MCF 10A (cell line): ENCODE measurements at regions of chr5 and their contacts with region 1.

Region 1: GRCh38 chr5:15794052-15794985 is 294.3 kb downstream of the FBXL7 start:
- DNase-seq: no peak
- H3K4me3 Mint-ChIP-seq: no peak overlapping the region
- H3K27ac Mint-ChIP-seq: no peak overlapping the region
- H3K4me1 Mint-ChIP-seq: no peaks in the 10 kb centered on the region
- H3K27me3 Mint-ChIP-seq: peaks cover 12% of the 10 kb centered on the region
- CTCF ChIP-seq: peak; percentile 35

Region 2: GRCh38 chr5:15105796-15106393 is 688.4 kb before region 1 on chr5:
- CTCF ChIA-PET with region 1: interaction called, 7 read pairs
- POLR2A ChIA-PET with region 1: no interaction called
- intact Hi-C with region 1: loop called (anchors 1 kb)
- DNase-seq: peak; percentile 67
- H3K4me3 Mint-ChIP-seq: no peak overlapping the region
- H3K27ac Mint-ChIP-seq: no peak overlapping the region
- H3K4me1 Mint-ChIP-seq: no peaks in the 10 kb centered on the region
- H3K27me3 Mint-ChIP-seq: no peaks in the 10 kb centered on the region
- CTCF ChIP-seq: peak; percentile 68

Region 3: DNA sequence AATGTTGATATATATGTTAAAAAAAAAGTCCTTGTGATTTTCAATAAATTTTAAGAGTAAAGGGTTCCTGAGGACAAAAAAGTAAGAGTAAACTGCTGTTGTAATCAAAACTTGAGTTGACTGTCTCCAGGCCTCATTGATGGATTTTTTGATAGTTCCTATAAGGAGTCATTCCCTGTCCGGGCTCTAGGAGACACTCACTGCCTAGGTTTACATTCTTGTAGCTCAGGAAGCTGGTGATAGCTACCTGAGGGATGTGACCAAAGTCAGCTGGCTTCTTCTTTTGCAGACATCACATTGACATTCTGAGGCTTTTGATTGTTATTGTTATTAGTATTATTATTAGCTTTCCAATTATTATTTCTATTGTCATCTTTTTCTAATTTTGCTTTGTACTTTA is 410.9 kb before region 1 on chr5:
- CTCF ChIA-PET with region 1: interaction called, 7 read pairs
- POLR2A ChIA-PET with region 1: no interaction called
- intact Hi-C with region 1: loop called (anchors 1 kb)
- DNase-seq: peak; percentile 16
- H3K4me3 Mint-ChIP-seq: no peak overlapping the region
- H3K27ac Mint-ChIP-seq: no peak overlapping the region
- H3K4me1 Mint-ChIP-seq: no peaks in the 10 kb centered on the region
- H3K27me3 Mint-ChIP-seq: peaks cover 31% of the 10 kb centered on the region
- CTCF ChIP-seq: peak; percentile 40

Region 4: GRCh38 chr5:15463231-15463980 is 330.9 kb before region 1 on chr5:
- CTCF ChIA-PET with region 1: interaction called, 7 read pairs
- POLR2A ChIA-PET with region 1: no interaction called
- intact Hi-C with region 1: loop called (anchors 1 kb)
- DNase-seq: no peak
- H3K4me3 Mint-ChIP-seq: no peak overlapping the region
- H3K27ac Mint-ChIP-seq: no peak overlapping the region
- H3K4me1 Mint-ChIP-seq: no peaks in the 10 kb centered on the region
- H3K27me3 Mint-ChIP-seq: peaks cover 10% of the 10 kb centered on the region
- CTCF ChIP-seq: peak; percentile 37

Region 5: GRCh38 chr5:15598294-15598902 is 195.9 kb before region 1 on chr5:
- CTCF ChIA-PET with region 1: no interaction called
- POLR2A ChIA-PET with region 1: no interaction called
- intact Hi-C with region 1: loop called (anchors 1 kb)
- DNase-seq: peak; percentile 44
- H3K4me3 Mint-ChIP-seq: no peak overlapping the region
- H3K27ac Mint-ChIP-seq: no peak overlapping the region
- H3K4me1 Mint-ChIP-seq: no peaks in the 10 kb centered on the region
- H3K27me3 Mint-ChIP-seq: no peaks in the 10 kb centered on the region
- CTCF ChIP-seq: peak; percentile 57

Region 6: GRCh38 chr5:15844253-15844652 is 49.9 kb after region 1 on chr5:
- CTCF ChIA-PET with region 1: no interaction called
- POLR2A ChIA-PET with region 1: no interaction called
- intact Hi-C with region 1: no loop called
- DNase-seq: no peak
- H3K4me3 Mint-ChIP-seq: no peak overlapping the region
- H3K27ac Mint-ChIP-seq: no peak overlapping the region
- H3K4me1 Mint-ChIP-seq: no peaks in the 10 kb centered on the region
- H3K27me3 Mint-ChIP-seq: no peaks in the 10 kb centered on the region
- CTCF ChIP-seq: no peak

Region 7: DNA sequence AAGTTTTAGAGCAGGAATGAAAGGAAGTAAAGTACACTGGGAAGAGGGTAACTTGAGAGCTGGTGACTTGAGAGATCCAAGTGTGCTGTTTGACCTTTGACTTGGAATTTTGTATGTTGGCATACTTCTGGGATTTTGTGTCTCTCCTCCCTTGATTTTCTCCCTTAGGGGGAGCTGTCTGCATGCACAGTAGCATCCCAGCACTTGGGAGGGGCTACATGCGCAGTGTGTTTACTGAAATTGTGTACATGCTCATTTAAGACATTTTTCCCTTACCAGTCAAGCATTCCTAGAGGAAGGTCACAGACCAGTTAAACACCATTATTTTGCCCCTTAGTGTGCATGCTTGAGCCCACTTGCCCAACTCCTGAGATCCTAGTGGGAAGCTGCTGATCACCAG is 551.1 kb after region 1 on chr5:
- CTCF ChIA-PET with region 1: interaction called, 10 read pairs
- POLR2A ChIA-PET with region 1: no interaction called
- intact Hi-C with region 1: no loop called
- DNase-seq: peak; percentile 25
- H3K4me3 Mint-ChIP-seq: no peak overlapping the region
- H3K27ac Mint-ChIP-seq: no peak overlapping the region
- H3K4me1 Mint-ChIP-seq: no peaks in the 10 kb centered on the region
- H3K27me3 Mint-ChIP-seq: peaks cover 55% of the 10 kb centered on the region
- CTCF ChIP-seq: no peak